ENCODE measurements at regions of chr3 and their contacts with region 1.

Region 1: GRCh38 chr3:126752303-126752842 is 48.3 kb downstream of the CHCHD6 start:
- DNase-seq: peak; percentile 85
- ATAC-seq: peak; percentile 93

Region 2: GRCh38 chr3:126777366-126777765 is 25.0 kb after region 1 on chr3:
- intact Hi-C with region 1: no loop called
- DNase-seq: no peak
- ATAC-seq: no peak

Region 3: GRCh38 chr3:126961191-126961790 is 208.9 kb after region 1 on chr3:
- intact Hi-C with region 1: loop called (anchors 2 kb)
- DNase-seq: peak; percentile 90
- ATAC-seq: peak; percentile 86

Region 4: DNA sequence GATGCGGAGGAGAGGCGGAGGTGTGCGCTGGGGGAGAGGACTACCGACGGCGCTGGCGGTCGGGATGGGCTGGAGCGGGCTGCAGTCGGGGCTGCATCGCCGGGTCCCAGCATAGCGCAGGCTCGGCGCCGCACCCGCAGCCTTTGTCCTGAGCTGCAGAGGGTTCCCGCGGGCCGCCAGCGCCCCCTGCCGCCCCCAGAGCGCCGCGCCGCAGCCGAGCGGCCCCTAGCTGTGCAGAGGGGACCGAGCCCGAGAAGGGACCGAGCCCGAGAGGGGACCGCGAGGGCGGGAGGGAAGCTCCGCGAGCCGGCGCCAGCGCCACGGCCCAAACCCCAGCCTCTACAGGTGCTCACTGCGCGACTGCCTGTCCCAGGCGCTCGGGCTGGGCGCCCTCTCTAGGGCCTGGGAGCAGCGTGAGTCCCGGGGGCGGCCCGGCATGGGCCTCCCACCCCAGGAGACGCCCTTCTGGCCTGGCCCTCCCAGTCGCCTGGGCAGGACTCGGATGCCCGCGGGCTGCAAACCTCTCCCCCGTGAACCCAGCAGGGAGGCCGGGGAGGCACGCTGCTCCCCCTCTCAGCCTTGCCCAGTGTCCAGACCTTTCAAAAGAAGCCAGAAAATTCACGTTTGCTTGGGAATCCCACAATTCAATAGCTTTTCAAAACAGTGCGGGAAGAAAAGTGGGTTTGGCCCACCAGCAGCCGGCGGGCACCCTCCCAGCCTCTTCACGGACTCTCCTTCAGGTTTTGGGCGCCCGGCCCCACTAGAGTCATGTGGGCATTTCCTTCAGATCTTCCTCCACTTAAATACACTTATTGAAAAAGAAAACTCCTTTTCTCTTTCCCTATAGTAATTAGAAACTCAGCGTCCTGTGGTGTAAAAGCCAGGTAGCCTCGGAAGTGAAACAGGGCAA is 703.4 kb after region 1 on chr3:
- intact Hi-C with region 1: loop called (anchors 5 kb)
- DNase-seq: peak; percentile 80
- ATAC-seq: peak; percentile 90

Region 5: DNA sequence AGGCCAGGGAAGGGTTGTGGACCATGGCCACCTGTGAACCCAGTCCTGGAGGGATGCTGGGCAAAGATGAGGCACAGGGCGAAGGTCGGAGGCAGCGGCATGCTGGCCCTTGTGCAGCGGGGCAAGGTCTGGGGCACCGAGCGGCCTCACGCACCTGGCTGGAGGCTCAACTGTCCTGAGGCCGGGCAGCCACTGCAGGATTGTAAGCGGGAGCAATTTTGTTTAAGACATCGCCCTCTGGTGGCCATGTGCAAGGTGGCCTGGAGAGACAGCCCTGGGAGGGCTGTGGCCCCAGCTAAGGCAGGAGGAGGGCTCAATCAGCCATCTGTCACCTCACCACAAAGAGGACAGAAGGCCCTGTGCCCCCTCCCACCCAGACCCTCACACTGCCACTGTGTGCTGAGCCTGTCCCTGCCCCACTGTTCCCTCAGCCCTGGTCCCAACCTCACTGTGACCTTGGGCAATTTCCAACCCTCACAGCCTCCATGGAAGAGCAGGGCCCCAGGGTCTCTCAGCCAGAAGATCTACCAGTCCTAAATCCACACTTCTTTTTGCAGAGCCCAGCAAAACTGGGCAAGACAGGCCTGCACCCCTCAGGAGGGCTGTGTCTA is 791.9 kb after region 1 on chr3:
- intact Hi-C with region 1: loop called (anchors 5 kb)
- DNase-seq: peak; percentile 79
- ATAC-seq: peak; percentile 33